Esophagus squamous epithelium (tissue), 5 donors: ENCODE measurements at regions of chr3 and their contacts with region 1.

Region 1: DNA sequence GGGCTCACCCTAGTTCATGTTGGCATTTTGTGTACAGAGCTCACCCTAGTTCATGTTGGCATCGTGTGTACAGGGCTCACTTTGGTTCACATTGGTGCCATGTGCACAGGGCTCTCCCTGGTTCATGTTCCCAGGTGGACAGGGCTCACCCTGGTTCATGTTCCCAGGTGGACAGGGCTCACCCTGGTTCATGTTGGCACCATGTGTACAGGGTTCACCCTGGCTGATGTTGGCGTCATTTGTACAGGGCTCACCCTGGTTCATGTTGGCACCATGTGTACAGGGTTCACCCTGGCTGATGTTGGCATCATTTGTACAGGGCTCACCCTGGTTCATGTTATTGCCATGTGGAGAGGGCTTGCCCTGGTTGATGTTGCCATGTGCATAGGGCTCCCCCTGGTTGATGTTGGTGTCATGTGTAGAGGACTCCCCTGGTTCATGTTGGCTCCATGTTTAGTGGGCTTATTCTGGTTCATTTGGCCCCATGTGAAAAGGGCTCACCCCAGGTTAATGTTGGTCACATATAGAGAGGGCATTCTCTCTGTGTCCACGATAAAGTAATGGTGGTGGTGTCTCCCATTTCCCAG is 31.7 kb upstream of the NR2C2 start:
- DNase-seq: no peak
- H3K4me3 ChIP-seq: no peak overlapping the region
- H3K27ac ChIP-seq: no peak overlapping the region
- H3K4me1 ChIP-seq: peaks cover 0 to 3% (median 0%) of the 10 kb centered on the region in 3 donors
- H3K27me3 ChIP-seq: peaks cover 0 to 28% (median 0%) of the 10 kb centered on the region in 4 donors
- CTCF ChIP-seq: peak in 1 of 6 experiments; percentile 19
- POLR2A ChIP-seq: no peak

Region 2: GRCh38 chr3:14508961-14509795 is 406.6 kb before region 1 on chr3:
- intact Hi-C with region 1: loop called (anchors 10 kb)
- DNase-seq: no peak
- H3K4me3 ChIP-seq: peak overlapping the region in 1 of 4 donors; percentile 26
- H3K27ac ChIP-seq: no peak overlapping the region
- H3K4me1 ChIP-seq: peaks cover 0 to 5% (median 5%) of the 10 kb centered on the region in 3 donors
- H3K27me3 ChIP-seq: no peaks in the 10 kb centered on the region
- CTCF ChIP-seq: peak; percentile 77 to 97 (median 80)
- POLR2A ChIP-seq: no peak

Region 3: GRCh38 chr3:14678015-14678503 is 237.7 kb before region 1 on chr3:
- intact Hi-C with region 1: loop called (anchors 5 kb)
- DNase-seq: no peak
- H3K4me3 ChIP-seq: no peak overlapping the region
- H3K27ac ChIP-seq: no peak overlapping the region
- H3K4me1 ChIP-seq: peaks cover 0 to 19% (median 0%) of the 10 kb centered on the region in 3 donors
- H3K27me3 ChIP-seq: no peaks in the 10 kb centered on the region
- CTCF ChIP-seq: no peak
- POLR2A ChIP-seq: no peak